Motor neuron (in vitro differentiated cells): ENCODE measurements at regions of chr17 and their contacts with region 1.

Region 1: GRCh38 chr17:73255671-73256181 is 6.0 kb downstream of the CPSF4L start:
- ATAC-seq: peak; percentile 84 to 100 (median 98)
- H3K4me3 ChIP-seq: no peak overlapping the region
- H3K27ac ChIP-seq: no peak overlapping the region
- H3K4me1 ChIP-seq: peaks cover 9 to 13% of the 10 kb centered on the region in 2 donors

Region 2: GRCh38 chr17:73365906-73366623 is 110.3 kb after region 1 on chr17:
- in situ Hi-C with region 1: loop called in 8 of 9 experiments (anchors 5 to 25 kb)
- ATAC-seq: peak in 5 of 8 experiments; percentile 8 to 53 (median 20)
- H3K4me3 ChIP-seq: no peak overlapping the region
- H3K27ac ChIP-seq: peak overlapping the region in 1 of 2 donors; percentile 10
- H3K4me1 ChIP-seq: peaks cover 20 to 29% of the 10 kb centered on the region in 2 donors

Region 3: DNA sequence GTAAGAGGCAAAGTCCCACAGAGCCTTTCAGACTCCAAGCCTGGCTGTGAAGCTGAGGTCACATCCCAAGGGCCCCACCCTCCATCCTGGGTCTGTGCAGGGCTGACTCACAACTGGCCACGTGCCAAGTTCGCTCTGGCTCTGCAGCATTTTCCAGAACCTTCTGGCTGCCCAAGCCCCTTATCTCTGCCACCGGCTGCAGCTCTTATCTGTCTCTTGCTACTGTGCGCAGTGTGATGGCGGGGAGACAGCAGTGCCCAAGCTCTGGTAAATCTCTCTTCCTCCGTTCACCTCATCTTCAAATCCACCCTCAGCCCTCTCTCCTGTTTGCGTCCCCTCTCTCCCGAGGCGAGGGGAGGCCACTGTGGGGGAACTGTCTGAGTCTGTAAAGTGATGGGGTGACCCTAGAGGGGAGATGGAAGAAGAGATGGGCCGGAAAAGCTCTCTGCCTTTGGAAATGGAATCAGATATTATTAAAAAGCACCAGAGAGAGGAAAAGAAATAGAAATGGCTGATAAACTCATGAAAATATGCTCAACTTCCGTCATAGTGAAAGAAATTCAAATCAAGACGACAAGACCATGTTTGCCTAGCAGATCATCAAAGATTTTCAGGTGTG is 218.8 kb after region 1 on chr17:
- in situ Hi-C with region 1: no loop called
- ATAC-seq: peak; percentile 59 to 83 (median 77)
- H3K4me3 ChIP-seq: no peak overlapping the region
- H3K27ac ChIP-seq: peak overlapping the region in 1 of 2 donors; percentile 17
- H3K4me1 ChIP-seq: peaks cover 58% of the 10 kb centered on the region in 2 donors

Region 4: GRCh38 chr17:73710095-73710592 is 454.4 kb after region 1 on chr17:
- in situ Hi-C with region 1: loop called in 1 of 9 experiments (anchors 10 kb)
- ATAC-seq: peak; percentile 12 to 89 (median 54)
- H3K4me3 ChIP-seq: no peak overlapping the region
- H3K27ac ChIP-seq: no peak overlapping the region
- H3K4me1 ChIP-seq: peaks cover 28 to 35% of the 10 kb centered on the region in 2 donors